Left ventricle myocardium superior (tissue), 1 donor: ENCODE measurements at regions of chr4 and their contacts with region 1.

Region 1: GRCh38 chr4:142353149-142353738 is 492.9 kb downstream of the INPP4B start:
- DNase-seq: no peak
- ATAC-seq: peak; percentile 48

Region 2: DNA sequence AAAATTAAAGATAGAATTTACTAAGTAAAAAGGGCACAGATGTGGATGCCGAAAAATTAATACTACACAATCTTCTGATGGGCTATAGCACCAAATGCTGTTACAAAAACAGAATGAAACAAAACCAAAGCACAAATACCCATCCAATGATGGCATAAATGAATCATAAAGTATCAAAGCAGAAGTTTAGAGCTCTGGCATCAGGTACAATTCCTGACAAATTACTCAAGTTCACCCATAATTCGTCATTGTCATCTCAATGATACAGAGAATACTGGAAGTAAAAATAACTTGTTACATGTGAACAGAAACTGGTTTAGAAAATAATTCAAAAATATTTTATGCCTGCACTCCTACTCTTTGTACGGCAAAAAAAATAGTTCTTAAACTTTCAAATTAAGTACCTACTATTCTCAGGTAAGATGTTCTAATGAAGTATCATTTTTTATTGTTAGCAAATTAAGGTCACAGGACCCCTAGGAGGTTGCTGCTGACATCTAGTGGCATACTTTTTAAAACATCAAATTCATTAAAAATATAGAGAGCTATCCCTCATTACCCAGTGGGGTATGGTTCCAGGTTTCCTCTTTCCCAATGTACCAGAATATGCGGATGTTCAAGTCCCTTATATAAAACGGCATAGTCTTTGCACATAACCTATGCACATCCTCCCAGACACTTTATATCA is 366.8 kb after region 1 on chr4:
- intact Hi-C with region 1: loop called (anchors 10 kb)
- DNase-seq: no peak
- ATAC-seq: peak; percentile 29

Region 3: GRCh38 chr4:142840516-142841123 is 487.4 kb after region 1 on chr4:
- intact Hi-C with region 1: loop called (anchors 5 kb)
- DNase-seq: no peak
- ATAC-seq: no peak